ENCODE measurements at regions of chr7 and their contacts with region 1.

Region 1: DNA sequence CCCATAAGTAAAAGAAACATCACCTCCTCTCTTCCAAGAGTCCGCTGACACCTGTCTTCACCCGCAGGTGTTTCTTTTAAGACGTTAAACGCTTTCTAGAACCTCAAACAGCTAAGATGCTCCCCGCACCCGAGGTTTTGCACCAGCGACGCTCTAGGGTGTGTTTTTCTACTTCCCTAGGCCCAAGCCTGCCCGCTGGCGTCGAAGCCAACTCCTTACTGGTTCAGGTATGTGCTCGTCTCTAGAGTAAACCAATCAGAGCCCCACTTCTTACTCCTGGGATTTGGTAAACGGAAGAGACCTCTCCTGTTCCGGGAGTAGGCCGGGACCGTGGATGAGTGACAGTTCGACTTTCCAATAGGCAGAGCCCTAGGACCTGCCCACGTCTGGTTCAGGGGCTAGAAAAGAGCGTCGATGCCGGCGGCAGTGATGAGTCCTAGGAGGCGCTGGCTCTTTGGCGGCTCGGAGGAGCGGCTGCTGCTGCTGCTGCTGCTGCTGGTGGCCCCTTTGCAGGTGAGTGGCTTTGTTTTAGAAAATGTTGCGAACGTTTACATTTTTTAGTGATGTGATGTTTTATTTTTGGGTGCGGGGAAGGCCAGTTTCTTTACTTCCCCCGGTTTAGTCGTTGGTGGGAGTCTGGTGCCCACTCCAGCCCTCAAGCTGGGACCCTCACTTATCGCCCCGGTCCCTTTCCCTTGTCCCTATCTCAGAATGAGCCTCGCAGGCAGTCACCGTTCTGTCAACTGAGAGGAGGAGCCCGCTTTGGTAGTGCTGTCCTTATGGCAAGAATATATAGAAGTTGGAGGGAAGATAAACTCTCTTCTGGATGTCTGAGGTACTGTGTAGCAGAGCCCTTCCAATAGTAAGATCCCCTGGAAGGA is at the start of gene BPGM:
- DNase-seq: peak; percentile 96
- H3K4me3 Mint-ChIP-seq: no peak within 1 kb of the TSS
- H3K27ac Mint-ChIP-seq: no peak within 1 kb of the TSS
- H3K4me1 Mint-ChIP-seq: peaks cover 37% of the 10 kb centered on the region
- H3K27me3 Mint-ChIP-seq: no peaks in the 10 kb centered on the region
- total RNA-seq, gene BPGM: 23.8 and 25.3 TPM in 2 replicates

Region 2: GRCh38 chr7:134126966-134127848 is 519.5 kb before region 1 on chr7 and contains the start of gene LRGUK:
- intact Hi-C with region 1: loop called (anchors 2 kb)
- DNase-seq: peak; percentile 72
- H3K4me3 Mint-ChIP-seq: peak within 1 kb of the TSS; percentile 88
- H3K27ac Mint-ChIP-seq: peak within 1 kb of the TSS; percentile 42
- H3K4me1 Mint-ChIP-seq: peaks cover 14% of the 10 kb centered on the region
- H3K27me3 Mint-ChIP-seq: peaks cover 19% of the 10 kb centered on the region
- total RNA-seq, gene LRGUK: 0.05 TPM in 1 of 2 replicates, not detected in the other

Region 3: GRCh38 chr7:134458806-134459698 is 187.6 kb before region 1 on chr7 and contains the start of gene AKR1B1:
- intact Hi-C with region 1: loop called (anchors 1 kb)
- DNase-seq: peak; percentile 87
- H3K4me3 Mint-ChIP-seq: peak within 1 kb of the TSS; percentile 90
- H3K27ac Mint-ChIP-seq: peak within 1 kb of the TSS; percentile 81
- H3K4me1 Mint-ChIP-seq: peaks cover 44% of the 10 kb centered on the region
- H3K27me3 Mint-ChIP-seq: no peaks in the 10 kb centered on the region
- total RNA-seq, gene AKR1B1: 99.7 and 111 TPM in 2 replicates

Region 4: DNA sequence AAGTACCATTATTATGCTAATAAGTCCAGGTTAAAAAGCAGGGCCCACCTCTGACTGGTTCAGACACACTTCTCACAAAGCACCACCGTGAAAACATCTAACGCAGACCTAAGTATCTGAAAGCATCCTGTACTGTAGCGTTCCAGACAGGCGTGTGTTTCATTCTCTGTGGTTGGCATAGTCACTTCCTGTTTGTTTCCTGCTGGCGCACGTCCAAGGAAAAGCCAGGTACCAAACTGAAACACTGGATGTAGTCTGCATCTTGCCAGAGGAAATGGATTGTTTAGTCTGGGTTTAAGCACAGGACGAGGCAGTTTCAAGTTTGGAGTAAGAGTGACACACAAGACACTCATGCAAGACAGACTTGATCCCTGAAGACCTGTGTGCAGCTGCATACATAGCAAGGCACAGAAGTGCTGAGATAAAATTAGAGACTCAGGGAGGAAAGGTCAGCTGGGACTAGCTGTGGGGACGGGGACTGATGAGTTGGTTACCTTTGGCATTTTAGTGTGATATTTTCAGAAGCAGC is 23.2 kb after region 1 on chr7:
- intact Hi-C with region 1: loop called (anchors 1 kb)
- DNase-seq: peak; percentile 26
- H3K4me3 Mint-ChIP-seq: peak overlapping the region; percentile 47
- H3K27ac Mint-ChIP-seq: peak overlapping the region; percentile 33
- H3K4me1 Mint-ChIP-seq: peaks cover 34% of the 10 kb centered on the region
- H3K27me3 Mint-ChIP-seq: no peaks in the 10 kb centered on the region

Region 5: DNA sequence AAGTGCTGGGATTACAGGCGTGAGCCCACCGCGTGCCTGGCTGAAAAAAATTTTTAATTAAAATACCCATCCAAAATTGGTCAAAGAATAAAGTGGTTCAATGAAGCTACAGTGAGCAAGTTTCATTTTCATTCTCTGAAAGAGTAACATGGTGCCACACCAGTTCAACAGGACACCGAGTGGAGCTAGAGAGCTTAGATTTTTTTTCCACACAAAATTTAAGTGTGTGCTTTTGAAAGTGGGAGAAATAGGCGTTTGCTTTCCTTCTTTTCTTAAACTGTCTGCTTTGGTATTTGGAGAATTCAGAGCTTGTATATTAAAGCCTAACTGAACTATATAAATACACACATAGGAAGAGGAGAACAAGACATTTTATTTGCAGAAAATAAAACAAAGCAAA is 43.4 kb after region 1 on chr7:
- intact Hi-C with region 1: no loop called
- DNase-seq: no peak
- H3K4me3 Mint-ChIP-seq: no peak overlapping the region
- H3K27ac Mint-ChIP-seq: no peak overlapping the region
- H3K4me1 Mint-ChIP-seq: peaks cover 6% of the 10 kb centered on the region
- H3K27me3 Mint-ChIP-seq: peaks cover 4% of the 10 kb centered on the region

Region 6: DNA sequence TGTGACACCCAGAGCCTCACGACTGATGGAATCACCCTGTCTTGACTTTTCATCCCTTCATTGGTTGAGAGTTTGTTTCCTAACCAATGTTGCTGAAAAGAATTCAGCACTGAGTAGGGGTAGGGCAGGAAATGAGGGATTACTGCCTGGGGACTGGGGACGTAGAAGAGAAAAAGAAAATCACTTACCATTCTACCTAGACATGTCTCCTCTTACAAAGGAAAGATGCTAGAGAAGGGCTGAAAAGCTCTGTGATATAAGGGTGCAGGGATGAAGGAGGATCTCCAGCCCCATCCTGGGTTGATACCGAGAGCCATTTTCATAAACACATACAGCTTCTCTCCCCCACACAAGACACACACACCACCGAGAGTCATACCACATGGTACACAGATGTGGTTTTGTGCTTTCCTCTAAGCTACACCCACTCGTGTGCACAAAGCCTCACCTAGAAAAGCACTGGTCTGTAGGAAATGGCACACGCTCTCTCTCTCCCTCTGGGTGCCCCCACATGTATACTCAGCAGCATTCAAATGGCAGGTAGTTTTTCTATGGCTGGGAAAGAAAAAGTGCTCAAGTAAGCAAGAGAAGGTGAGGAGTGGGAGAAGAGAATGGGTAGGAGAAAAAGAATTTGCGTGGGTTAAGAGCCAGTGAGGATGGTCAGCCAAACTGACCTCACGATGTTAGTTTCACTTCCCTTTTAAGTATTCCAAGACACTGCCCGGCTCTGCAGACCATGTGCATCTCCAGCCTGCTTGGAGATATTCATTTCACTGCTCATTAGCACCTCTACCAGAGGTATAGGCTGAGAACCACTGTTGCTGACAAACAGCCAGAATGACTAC is 218.6 kb after region 1 on chr7:
- intact Hi-C with region 1: loop called (anchors 5 kb)
- DNase-seq: peak; percentile 44
- H3K4me3 Mint-ChIP-seq: peak overlapping the region; percentile 8
- H3K27ac Mint-ChIP-seq: peak overlapping the region; percentile 49
- H3K4me1 Mint-ChIP-seq: peaks cover 30% of the 10 kb centered on the region
- H3K27me3 Mint-ChIP-seq: no peaks in the 10 kb centered on the region

Region 7: GRCh38 chr7:135211179-135211945 is 564.7 kb after region 1 on chr7 and contains the start of gene WDR91:
- intact Hi-C with region 1: loop called (anchors 2 kb)
- DNase-seq: peak; percentile 86
- H3K4me3 Mint-ChIP-seq: peak within 1 kb of the TSS; percentile 96
- H3K27ac Mint-ChIP-seq: peak within 1 kb of the TSS; percentile 98
- H3K4me1 Mint-ChIP-seq: peaks cover 47% of the 10 kb centered on the region
- H3K27me3 Mint-ChIP-seq: no peaks in the 10 kb centered on the region
- total RNA-seq, gene WDR91: 34.6 and 35.4 TPM in 2 replicates

Region 8: GRCh38 chr7:135977007-135977741 is 1330.5 kb after region 1 on chr7 and contains the start of gene MTPN:
- intact Hi-C with region 1: loop called (anchors 2 kb)
- DNase-seq: peak; percentile 98
- H3K4me3 Mint-ChIP-seq: peak within 1 kb of the TSS; percentile 98
- H3K27ac Mint-ChIP-seq: peak within 1 kb of the TSS; percentile 88
- H3K4me1 Mint-ChIP-seq: peaks cover 75% of the 10 kb centered on the region
- H3K27me3 Mint-ChIP-seq: peaks cover 2% of the 10 kb centered on the region
- total RNA-seq, gene MTPN: 117 and 119 TPM in 2 replicates